Aorta (tissue), 5 donors: ENCODE measurements at regions of chr11 and their contacts with region 1.

Region 1: GRCh38 chr11:5151713-5152153 is 2.8 kb downstream of the OR52A1 start:
- DNase-seq: no peak
- ATAC-seq: no peak
- H3K4me3 ChIP-seq: no peak overlapping the region
- H3K27ac ChIP-seq: no peak overlapping the region
- H3K4me1 ChIP-seq: no peaks in the 10 kb centered on the region
- H3K27me3 ChIP-seq: no peaks in the 10 kb centered on the region

Region 2: GRCh38 chr11:5210376-5210885 is 58.7 kb after region 1 on chr11:
- intact Hi-C with region 1: loop called in 1 of 2 experiments (anchors 2 kb)
- DNase-seq: no peak
- ATAC-seq: no peak
- H3K4me3 ChIP-seq: no peak overlapping the region
- H3K27ac ChIP-seq: no peak overlapping the region
- H3K4me1 ChIP-seq: no peaks in the 10 kb centered on the region
- H3K27me3 ChIP-seq: peaks cover 0 to 2% of the 10 kb centered on the region in 2 donors

Region 3: GRCh38 chr11:5380740-5381342 is 229.1 kb after region 1 on chr11:
- intact Hi-C with region 1: no loop called
- DNase-seq: peak; percentile 55 to 57
- ATAC-seq: peak; percentile 68
- H3K4me3 ChIP-seq: no peak overlapping the region
- H3K27ac ChIP-seq: no peak overlapping the region
- H3K4me1 ChIP-seq: no peaks in the 10 kb centered on the region
- H3K27me3 ChIP-seq: no peaks in the 10 kb centered on the region

Region 4: GRCh38 chr11:6099577-6099976 is 947.8 kb after region 1 on chr11:
- intact Hi-C with region 1: no loop called
- DNase-seq: no peak
- ATAC-seq: no peak
- H3K4me3 ChIP-seq: no peak overlapping the region
- H3K27ac ChIP-seq: no peak overlapping the region
- H3K4me1 ChIP-seq: peaks cover 0 to 3% of the 10 kb centered on the region in 2 donors
- H3K27me3 ChIP-seq: no peaks in the 10 kb centered on the region